Activated CD8-positive, alpha-beta memory T cell treated with anti-CD3 and anti-CD28 coated beads, Interleukin-2, amount 10 ng/mL, durations not matched to agents 7 days and 5 days (primary cell): ENCODE measurements at regions of chr18 and their contacts with region 1.

Region 1: GRCh38 chr18:50429207-50429948 is 54.5 kb downstream of the SKA1 start:
- DNase-seq: no peak
- ATAC-seq: no peak
- H3K4me3 Mint-ChIP-seq: no peak overlapping the region
- H3K27ac Mint-ChIP-seq: no peak overlapping the region
- H3K4me1 Mint-ChIP-seq: no peaks in the 10 kb centered on the region
- H3K27me3 Mint-ChIP-seq: peaks cover 26% of the 10 kb centered on the region

Region 2: DNA sequence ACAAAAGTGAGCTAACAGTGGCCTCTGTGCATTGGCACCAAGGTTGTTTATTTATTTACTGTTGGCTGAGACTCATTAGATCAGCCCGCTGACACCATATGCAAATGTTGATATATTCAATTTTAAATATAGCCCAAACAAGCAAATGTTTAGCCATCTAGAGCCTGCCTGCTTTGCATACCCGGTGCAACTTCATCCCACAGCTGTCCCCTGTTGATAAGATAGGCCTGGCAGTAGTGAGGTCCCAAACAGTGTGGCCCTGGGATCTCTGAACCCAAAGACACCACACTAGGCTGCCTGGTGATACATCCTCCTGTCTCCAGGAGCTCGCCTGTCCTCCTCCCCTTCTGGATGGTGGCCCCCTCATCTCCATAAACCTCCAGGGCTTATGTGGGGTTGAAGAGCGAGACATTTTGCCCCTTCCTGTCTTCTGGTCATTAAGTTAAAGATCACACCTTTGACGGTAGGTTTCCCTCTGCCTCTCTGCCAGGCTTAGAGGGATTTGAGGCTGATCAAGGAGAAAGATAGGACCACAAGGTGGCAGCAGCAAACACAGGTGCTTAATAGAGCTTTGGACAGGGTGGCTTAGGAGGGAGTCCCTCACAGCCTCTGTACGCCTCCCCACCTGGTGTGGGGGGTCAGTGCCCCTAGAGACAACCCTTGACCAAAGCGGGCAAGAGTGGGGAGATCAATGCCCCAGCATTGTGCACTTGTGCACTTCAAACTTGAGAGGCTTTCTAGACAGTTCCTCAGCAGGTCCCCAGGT is 210.8 kb before region 1 on chr18:
- CTCF ChIA-PET with region 1: interaction called, 13 read pairs
- DNase-seq: peak; percentile 54
- ATAC-seq: peak; percentile 55
- H3K4me3 Mint-ChIP-seq: no peak overlapping the region
- H3K27ac Mint-ChIP-seq: no peak overlapping the region
- H3K4me1 Mint-ChIP-seq: no peaks in the 10 kb centered on the region
- H3K27me3 Mint-ChIP-seq: peaks cover 30% of the 10 kb centered on the region

Region 3: DNA sequence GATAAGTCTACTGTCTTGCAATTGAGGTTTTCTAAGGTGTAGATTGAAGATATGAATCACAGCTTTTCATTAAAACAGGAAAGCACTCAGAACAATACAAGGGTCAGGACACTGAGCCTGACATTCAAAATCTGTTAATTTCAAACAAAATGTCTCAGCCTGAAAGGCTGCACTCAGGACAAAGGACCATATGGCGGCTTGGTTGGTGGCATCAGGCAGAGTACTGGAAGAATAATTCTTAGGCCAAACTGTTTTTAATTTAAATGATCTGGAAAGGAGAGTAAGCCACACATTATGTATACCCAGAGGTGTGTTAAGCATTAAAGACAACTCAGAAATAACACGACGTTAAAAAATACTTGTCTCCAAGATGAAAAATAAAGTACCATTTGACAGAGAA is 31.3 kb after region 1 on chr18:
- CTCF ChIA-PET with region 1: no interaction called
- DNase-seq: no peak
- ATAC-seq: no peak
- H3K4me3 Mint-ChIP-seq: no peak overlapping the region
- H3K27ac Mint-ChIP-seq: no peak overlapping the region
- H3K4me1 Mint-ChIP-seq: no peaks in the 10 kb centered on the region
- H3K27me3 Mint-ChIP-seq: peaks cover 2% of the 10 kb centered on the region

Region 4: GRCh38 chr18:50619861-50620275 is 190.5 kb after region 1 on chr18:
- CTCF ChIA-PET with region 1: no interaction called
- DNase-seq: no peak
- ATAC-seq: no peak
- H3K4me3 Mint-ChIP-seq: no peak overlapping the region
- H3K27ac Mint-ChIP-seq: no peak overlapping the region
- H3K4me1 Mint-ChIP-seq: no peaks in the 10 kb centered on the region
- H3K27me3 Mint-ChIP-seq: peaks cover 10% of the 10 kb centered on the region

Region 5: GRCh38 chr18:50644810-50645209 is 215.4 kb after region 1 on chr18:
- CTCF ChIA-PET with region 1: no interaction called
- DNase-seq: no peak
- ATAC-seq: no peak
- H3K4me3 Mint-ChIP-seq: no peak overlapping the region
- H3K27ac Mint-ChIP-seq: no peak overlapping the region
- H3K4me1 Mint-ChIP-seq: no peaks in the 10 kb centered on the region
- H3K27me3 Mint-ChIP-seq: no peaks in the 10 kb centered on the region